Activated CD4-positive, alpha-beta memory T cell treated with anti-CD3 and anti-CD28 coated beads, Interleukin-2, amount 10 ng/mL, durations not matched to agents 7 days and 5 days (primary cell): ENCODE measurements at regions of chr1 and their contacts with region 1.

Region 1: DNA sequence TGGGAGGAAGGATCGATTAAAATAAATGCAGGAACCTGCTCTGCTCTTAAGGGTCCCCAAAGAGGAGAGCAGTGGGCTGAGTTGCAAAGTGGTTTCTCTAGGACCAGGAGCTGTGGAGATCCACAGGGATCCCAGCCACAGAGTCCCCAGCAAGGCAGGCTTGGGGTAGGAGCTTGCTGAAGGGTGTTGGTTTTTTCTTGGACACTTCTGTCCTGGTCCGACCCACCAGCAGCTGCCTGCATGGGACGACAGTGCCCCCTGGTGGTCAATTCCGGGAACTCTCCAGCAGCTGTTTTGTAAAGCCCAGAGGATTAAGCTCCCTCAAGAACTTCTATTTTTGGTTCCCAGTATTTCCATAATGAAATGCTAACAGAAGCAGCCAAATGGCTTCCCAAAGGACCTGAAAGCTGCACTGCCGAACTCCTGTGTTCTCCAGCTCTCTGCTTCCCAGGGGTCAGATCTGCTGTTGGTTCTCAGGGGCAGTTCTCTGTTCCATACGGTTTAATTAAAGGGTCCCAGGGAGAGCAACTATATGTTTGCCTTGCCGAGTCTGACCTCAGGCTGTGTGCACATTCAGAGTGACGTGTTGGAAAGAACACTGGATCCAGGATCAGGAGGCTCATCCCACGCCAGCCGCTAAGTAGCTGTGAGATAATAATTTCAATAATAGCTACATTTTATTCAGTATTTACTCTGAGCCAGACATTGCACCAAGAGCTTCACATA is 23.2 kb downstream of the NENF start:
- DNase-seq: peak; percentile 85
- H3K4me3 Mint-ChIP-seq: no peak overlapping the region
- H3K27ac Mint-ChIP-seq: no peak overlapping the region
- H3K4me1 Mint-ChIP-seq: peaks cover 4% of the 10 kb centered on the region
- H3K27me3 Mint-ChIP-seq: no peaks in the 10 kb centered on the region

Region 2: GRCh38 chr1:211698161-211699026 is 757.6 kb before region 1 on chr1:
- CTCF ChIA-PET with region 1: interaction called, 11 read pairs
- POLR2A ChIA-PET with region 1: no interaction called
- DNase-seq: peak; percentile 85
- H3K4me3 Mint-ChIP-seq: peak overlapping the region; percentile 52
- H3K27ac Mint-ChIP-seq: no peak overlapping the region
- H3K4me1 Mint-ChIP-seq: peaks cover 46% of the 10 kb centered on the region
- H3K27me3 Mint-ChIP-seq: peaks cover 20% of the 10 kb centered on the region

Region 3: GRCh38 chr1:212070720-212071302 is 385.2 kb before region 1 on chr1:
- CTCF ChIA-PET with region 1: interaction called, 81 read pairs
- POLR2A ChIA-PET with region 1: no interaction called
- DNase-seq: no peak
- H3K4me3 Mint-ChIP-seq: no peak overlapping the region
- H3K27ac Mint-ChIP-seq: no peak overlapping the region
- H3K4me1 Mint-ChIP-seq: no peaks in the 10 kb centered on the region
- H3K27me3 Mint-ChIP-seq: no peaks in the 10 kb centered on the region

Region 4: GRCh38 chr1:212218911-212219310 is 237.1 kb before region 1 on chr1:
- CTCF ChIA-PET with region 1: no interaction called
- POLR2A ChIA-PET with region 1: no interaction called
- DNase-seq: no peak
- H3K4me3 Mint-ChIP-seq: no peak overlapping the region
- H3K27ac Mint-ChIP-seq: no peak overlapping the region
- H3K4me1 Mint-ChIP-seq: peaks cover 22% of the 10 kb centered on the region
- H3K27me3 Mint-ChIP-seq: peaks cover 4% of the 10 kb centered on the region

Region 5: DNA sequence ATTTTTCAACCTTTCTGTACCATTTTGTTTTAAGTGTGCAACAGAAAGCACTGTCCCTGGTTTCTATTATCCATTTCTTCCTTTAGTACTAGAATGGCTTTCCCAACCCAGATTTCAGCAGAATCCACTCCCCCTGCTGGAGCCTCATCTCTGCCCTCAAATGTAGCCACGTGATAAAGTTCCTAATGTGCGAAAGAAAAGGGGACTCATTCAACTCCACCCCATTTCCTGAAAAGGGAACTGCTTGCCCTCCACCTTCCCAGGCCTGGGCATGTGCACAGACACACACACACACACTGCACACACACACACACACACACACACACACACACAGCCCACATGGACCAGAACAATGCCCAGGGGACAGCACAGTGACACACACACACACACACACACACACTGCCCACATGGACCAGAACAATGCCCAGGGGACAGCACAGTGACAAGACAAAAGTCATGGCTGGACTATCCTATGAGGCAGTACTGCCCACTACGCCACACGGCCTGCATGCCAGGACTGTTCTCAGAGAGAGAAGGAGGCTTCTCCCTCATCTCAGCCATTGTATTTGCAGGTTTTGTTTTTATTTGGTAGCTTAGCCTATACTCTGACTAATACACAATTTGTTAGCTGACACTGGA is 74.5 kb before region 1 on chr1:
- CTCF ChIA-PET with region 1: interaction called, 15 read pairs
- POLR2A ChIA-PET with region 1: no interaction called
- DNase-seq: no peak
- H3K4me3 Mint-ChIP-seq: no peak overlapping the region
- H3K27ac Mint-ChIP-seq: no peak overlapping the region
- H3K4me1 Mint-ChIP-seq: no peaks in the 10 kb centered on the region
- H3K27me3 Mint-ChIP-seq: no peaks in the 10 kb centered on the region

Region 6: GRCh38 chr1:212440419-212440818 is 15.5 kb before region 1 on chr1:
- CTCF ChIA-PET with region 1: interaction called, 13 read pairs
- POLR2A ChIA-PET with region 1: no interaction called
- DNase-seq: no peak
- H3K4me3 Mint-ChIP-seq: no peak overlapping the region
- H3K27ac Mint-ChIP-seq: no peak overlapping the region
- H3K4me1 Mint-ChIP-seq: no peaks in the 10 kb centered on the region
- H3K27me3 Mint-ChIP-seq: no peaks in the 10 kb centered on the region

Region 7: DNA sequence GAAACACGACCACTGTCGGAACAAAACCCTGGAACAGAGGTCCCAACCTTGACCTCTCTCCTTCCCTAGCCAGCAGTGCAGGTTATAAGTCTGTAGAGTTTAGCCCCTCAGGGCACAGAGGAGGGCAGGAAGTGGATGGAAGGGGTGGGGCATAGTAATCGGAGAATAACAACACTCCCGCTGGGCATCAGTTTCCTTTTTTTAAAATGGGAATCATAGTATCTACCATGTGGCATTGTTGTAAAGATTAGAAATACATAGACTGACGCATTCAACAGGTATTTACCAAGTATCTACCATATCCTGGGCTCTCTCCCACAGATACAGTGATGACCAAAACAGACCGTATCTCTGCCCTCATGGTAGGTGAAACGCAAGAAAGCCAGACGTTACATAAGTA is 127.7 kb after region 1 on chr1:
- CTCF ChIA-PET with region 1: no interaction called
- POLR2A ChIA-PET with region 1: no interaction called
- DNase-seq: no peak
- H3K4me3 Mint-ChIP-seq: no peak overlapping the region
- H3K27ac Mint-ChIP-seq: no peak overlapping the region
- H3K4me1 Mint-ChIP-seq: peaks cover 3% of the 10 kb centered on the region
- H3K27me3 Mint-ChIP-seq: peaks cover 24% of the 10 kb centered on the region

Region 8: GRCh38 chr1:212665241-212666115 is 209.5 kb after region 1 on chr1:
- CTCF ChIA-PET with region 1: interaction called, 16 read pairs
- POLR2A ChIA-PET with region 1: no interaction called
- DNase-seq: peak; percentile 85
- H3K4me3 Mint-ChIP-seq: peak overlapping the region; percentile 74
- H3K27ac Mint-ChIP-seq: peak overlapping the region; percentile 71
- H3K4me1 Mint-ChIP-seq: peaks cover 47% of the 10 kb centered on the region
- H3K27me3 Mint-ChIP-seq: peaks cover 9% of the 10 kb centered on the region

Region 9: GRCh38 chr1:212994926-212995325 is 539.0 kb after region 1 on chr1:
- CTCF ChIA-PET with region 1: interaction called, 13 read pairs
- POLR2A ChIA-PET with region 1: no interaction called
- DNase-seq: no peak
- H3K4me3 Mint-ChIP-seq: no peak overlapping the region
- H3K27ac Mint-ChIP-seq: no peak overlapping the region
- H3K4me1 Mint-ChIP-seq: peaks cover 3% of the 10 kb centered on the region
- H3K27me3 Mint-ChIP-seq: no peaks in the 10 kb centered on the region